Mucosa of descending colon (tissue), 3 donors: ENCODE measurements at regions of chr3 and their contacts with region 1.

Region 1: DNA sequence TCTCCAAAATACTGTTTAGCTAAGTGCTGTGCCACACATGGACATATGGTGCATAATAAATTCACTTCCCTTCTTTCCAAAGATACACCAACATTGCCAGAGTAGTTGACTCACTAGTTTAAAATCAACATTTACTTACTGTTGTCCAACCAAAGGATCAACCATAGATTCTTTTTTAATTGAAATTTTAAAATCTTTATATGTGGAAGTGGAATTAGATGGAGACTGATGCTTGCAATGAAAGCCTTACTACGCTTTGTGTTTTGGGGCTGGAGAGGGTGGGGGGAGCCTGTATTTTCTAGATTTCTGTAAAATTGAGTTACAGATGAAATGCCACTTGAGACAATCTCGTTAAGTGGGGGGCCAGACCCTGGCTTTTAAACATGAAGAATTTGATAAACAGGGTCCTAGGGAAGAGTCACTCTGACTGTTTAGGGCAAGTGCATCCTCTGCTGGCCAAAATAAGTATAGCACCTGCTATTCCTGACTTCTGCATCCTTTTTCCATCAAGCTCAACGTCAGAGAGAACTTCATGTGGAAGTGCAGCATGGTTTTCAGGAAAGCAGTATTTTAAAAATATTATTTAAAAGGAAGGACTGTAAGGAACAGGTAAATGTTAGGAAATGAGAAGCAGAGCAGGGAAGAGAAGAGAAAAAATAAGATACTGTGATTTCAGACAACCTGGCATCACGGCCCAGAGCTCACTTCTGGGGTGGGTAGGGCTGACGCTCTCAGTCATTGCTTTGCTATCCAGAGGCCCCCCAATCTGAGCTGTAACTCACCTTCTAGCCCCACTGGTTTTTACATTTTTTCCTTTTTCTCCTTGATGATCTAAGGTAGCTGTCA is 76.7 kb downstream of the BOC start:
- DNase-seq: peak in 1 of 3 donors; percentile 87
- ATAC-seq: peak; percentile 58
- H3K4me3 ChIP-seq: no peak overlapping the region
- H3K4me1 ChIP-seq: no peaks in the 10 kb centered on the region
- CTCF ChIP-seq: peak; percentile 91

Region 2: DNA sequence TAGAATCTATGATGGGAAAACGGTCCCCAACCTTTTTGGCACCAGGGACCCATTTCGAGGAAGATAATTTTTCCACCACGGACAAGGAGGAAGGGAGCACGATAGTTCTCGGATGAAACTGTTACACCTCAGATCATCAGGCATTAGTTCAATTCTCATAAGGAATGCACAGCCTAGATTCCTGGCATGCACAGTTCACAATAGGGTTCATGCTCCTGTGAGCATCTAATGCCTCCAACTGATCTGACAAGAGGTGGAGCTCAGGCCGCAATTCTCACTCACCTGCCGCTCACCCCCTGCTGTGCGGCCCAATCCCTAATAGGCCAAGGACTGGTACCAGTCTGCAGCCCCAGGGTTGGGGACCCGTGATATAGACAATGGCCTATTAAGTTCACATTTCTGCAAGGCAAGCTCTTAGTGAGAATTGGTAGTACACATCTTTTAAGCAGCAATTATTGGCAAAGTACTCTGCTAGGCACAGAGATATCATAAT is 339.6 kb before region 1 on chr3:
- intact Hi-C with region 1: no loop called
- DNase-seq: no peak
- ATAC-seq: no peak
- H3K4me3 ChIP-seq: no peak overlapping the region
- H3K4me1 ChIP-seq: no peaks in the 10 kb centered on the region
- CTCF ChIP-seq: no peak

Region 3: GRCh38 chr3:113051302-113051711 is 236.7 kb before region 1 on chr3:
- intact Hi-C with region 1: loop called (anchors 2 to 5 kb)
- DNase-seq: peak; percentile 56 to 95 (median 73)
- ATAC-seq: peak; percentile 100
- H3K4me3 ChIP-seq: no peak overlapping the region
- H3K4me1 ChIP-seq: no peaks in the 10 kb centered on the region
- CTCF ChIP-seq: peak; percentile 82

Region 4: DNA sequence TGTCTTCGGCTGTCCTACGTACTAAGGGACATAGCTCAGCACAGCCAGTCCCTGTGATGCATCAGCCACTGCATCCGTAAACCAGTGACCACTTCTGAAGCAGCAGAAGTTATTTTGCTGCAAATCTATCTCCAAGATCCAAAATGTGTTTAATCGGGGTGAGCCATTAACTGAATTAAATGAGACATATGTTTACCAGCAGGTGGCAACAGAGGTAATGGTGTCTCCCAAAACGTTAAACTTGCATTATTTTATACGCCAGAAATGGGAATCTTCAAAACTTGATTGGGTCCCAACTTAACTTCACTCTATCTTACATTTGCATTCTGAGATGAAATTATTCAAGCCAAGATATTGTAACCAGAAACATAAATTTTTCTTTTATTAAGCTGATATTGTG is 152.0 kb before region 1 on chr3:
- intact Hi-C with region 1: loop called (anchors 10 kb)
- DNase-seq: no peak
- ATAC-seq: no peak
- H3K4me3 ChIP-seq: no peak overlapping the region
- H3K4me1 ChIP-seq: no peaks in the 10 kb centered on the region
- CTCF ChIP-seq: no peak

Region 5: GRCh38 chr3:113148286-113148685 is 139.7 kb before region 1 on chr3:
- intact Hi-C with region 1: loop called in 1 of 2 experiments (anchors 10 kb)
- DNase-seq: peak; percentile 34 to 55 (median 46)
- ATAC-seq: peak; percentile 86
- H3K4me3 ChIP-seq: no peak overlapping the region
- H3K4me1 ChIP-seq: no peaks in the 10 kb centered on the region
- CTCF ChIP-seq: no peak

Region 6: DNA sequence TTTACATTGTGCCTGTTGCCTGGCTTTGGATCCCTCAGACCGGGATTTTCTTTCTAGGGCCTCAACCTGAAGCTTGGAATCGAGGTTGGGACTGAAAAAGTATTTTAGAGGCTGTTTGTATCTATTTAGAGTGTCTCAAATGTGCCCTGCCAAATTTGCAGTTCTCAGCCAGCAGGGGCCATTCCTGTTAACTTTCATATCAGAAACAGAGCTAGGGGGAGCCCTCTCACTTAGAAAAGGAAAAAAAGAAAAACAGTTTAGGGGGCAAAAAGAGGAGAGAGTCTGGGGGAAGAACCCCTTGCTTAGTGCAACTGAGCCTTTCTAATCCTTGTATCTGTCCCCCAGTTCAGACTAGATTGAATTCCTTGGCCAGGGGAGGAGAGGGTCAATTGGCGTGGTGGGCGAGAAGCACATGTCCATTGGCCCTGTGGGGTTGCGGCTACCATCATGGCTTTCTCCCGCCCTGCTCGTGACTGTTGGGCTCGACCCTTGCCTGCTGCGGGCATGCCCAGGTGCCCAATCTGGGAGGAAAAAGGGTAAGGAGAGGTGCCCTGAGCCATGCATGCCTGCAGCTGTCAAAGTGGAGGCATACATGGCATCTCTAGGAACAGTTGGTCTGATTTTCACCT is 51.7 kb after region 1 on chr3:
- intact Hi-C with region 1: no loop called
- DNase-seq: no peak
- ATAC-seq: no peak
- H3K4me3 ChIP-seq: no peak overlapping the region
- H3K4me1 ChIP-seq: peaks cover 3% of the 10 kb centered on the region
- CTCF ChIP-seq: no peak

Region 7: DNA sequence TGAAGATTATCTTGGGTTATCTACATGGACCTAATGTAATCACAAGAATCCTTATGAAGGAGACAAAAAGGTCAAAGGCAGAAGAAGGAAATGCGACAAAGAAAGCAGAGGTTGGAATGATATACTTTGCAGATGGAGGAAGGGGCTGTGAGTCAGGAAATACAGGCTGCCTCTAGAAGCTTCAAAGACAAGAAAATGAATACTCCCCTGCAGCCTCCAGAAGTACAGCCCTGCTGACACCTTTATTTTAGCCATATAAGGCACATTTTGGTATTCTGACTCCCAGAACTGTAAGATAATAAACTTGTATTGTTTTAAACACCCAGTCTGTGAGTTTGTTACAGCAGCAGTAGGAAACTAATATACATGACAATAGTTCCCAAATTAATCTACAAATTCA is 303.0 kb after region 1 on chr3:
- intact Hi-C with region 1: no loop called
- DNase-seq: no peak
- ATAC-seq: no peak
- H3K4me3 ChIP-seq: no peak overlapping the region
- H3K4me1 ChIP-seq: no peaks in the 10 kb centered on the region
- CTCF ChIP-seq: no peak

Region 8: GRCh38 chr3:113606539-113607218 is 318.7 kb after region 1 on chr3:
- intact Hi-C with region 1: no loop called
- DNase-seq: peak in 1 of 3 donors; percentile 21
- ATAC-seq: peak; percentile 84
- H3K4me3 ChIP-seq: no peak overlapping the region
- H3K4me1 ChIP-seq: no peaks in the 10 kb centered on the region
- CTCF ChIP-seq: no peak